A673 (cell line): ENCODE measurements at regions of chr7 and their contacts with region 1.

Region 1: GRCh38 chr7:44654255-44654796 is 47.9 kb downstream of the OGDH start:
- DNase-seq: no peak
- H3K4me3 ChIP-seq: no peak overlapping the region
- H3K27ac ChIP-seq: no peak overlapping the region
- H3K4me1 ChIP-seq: no peaks in the 10 kb centered on the region
- H3K27me3 ChIP-seq: no peaks in the 10 kb centered on the region
- CTCF ChIP-seq: no peak

Region 2: DNA sequence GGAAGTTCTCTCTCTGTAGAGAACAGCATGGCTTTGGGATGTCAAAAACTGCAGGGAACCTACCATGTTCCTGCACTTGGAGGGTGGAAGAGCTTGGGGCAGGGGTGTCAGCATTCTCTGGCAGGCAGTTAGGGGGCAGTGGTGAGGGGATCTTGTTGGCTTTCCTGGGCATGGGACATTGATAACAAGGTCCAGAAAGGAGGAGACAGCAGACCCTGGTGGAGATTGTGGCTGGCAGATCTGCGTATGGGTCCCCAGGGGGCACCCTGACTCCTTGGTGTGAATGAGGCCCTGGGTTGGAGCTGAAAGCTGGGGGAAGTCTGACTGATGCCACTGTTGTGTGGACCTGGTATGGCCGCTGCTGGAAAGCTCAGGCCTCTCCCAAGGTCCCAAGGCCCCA is 306.0 kb before region 1 on chr7:
- CTCF ChIA-PET with region 1: no interaction called
- POLR2A ChIA-PET with region 1: no interaction called
- intact Hi-C with region 1: no loop called
- DNase-seq: peak; percentile 49
- H3K4me3 ChIP-seq: no peak overlapping the region
- H3K27ac ChIP-seq: no peak overlapping the region
- H3K4me1 ChIP-seq: no peaks in the 10 kb centered on the region
- H3K27me3 ChIP-seq: no peaks in the 10 kb centered on the region
- CTCF ChIP-seq: peak; percentile 49

Region 3: GRCh38 chr7:44824894-44825526 is 170.7 kb after region 1 on chr7:
- CTCF ChIA-PET with region 1: no interaction called
- POLR2A ChIA-PET with region 1: interaction called, 12 read pairs
- intact Hi-C with region 1: no loop called
- DNase-seq: no peak
- H3K4me3 ChIP-seq: no peak overlapping the region
- H3K27ac ChIP-seq: no peak overlapping the region
- H3K4me1 ChIP-seq: no peaks in the 10 kb centered on the region
- H3K27me3 ChIP-seq: no peaks in the 10 kb centered on the region
- CTCF ChIP-seq: no peak